ENCODE measurements at regions of chr15 and their contacts with region 1.

Region 1: GRCh38 chr15:48472753-48473152 is 141.5 kb downstream of the DUT start:
- DNase-seq: no peak
- CTCF ChIP-seq: no peak

Region 2: GRCh38 chr15:48459571-48460470 is 12.9 kb before region 1 on chr15:
- CTCF ChIA-PET with region 1: interaction called, 10 read pairs
- POLR2A ChIA-PET with region 1: no interaction called
- DNase-seq: no peak
- CTCF ChIP-seq: no peak

Measured in GM10248 (cell line).